ENCODE measurements at regions of chr1 and their contacts with region 1.

Region 1: DNA sequence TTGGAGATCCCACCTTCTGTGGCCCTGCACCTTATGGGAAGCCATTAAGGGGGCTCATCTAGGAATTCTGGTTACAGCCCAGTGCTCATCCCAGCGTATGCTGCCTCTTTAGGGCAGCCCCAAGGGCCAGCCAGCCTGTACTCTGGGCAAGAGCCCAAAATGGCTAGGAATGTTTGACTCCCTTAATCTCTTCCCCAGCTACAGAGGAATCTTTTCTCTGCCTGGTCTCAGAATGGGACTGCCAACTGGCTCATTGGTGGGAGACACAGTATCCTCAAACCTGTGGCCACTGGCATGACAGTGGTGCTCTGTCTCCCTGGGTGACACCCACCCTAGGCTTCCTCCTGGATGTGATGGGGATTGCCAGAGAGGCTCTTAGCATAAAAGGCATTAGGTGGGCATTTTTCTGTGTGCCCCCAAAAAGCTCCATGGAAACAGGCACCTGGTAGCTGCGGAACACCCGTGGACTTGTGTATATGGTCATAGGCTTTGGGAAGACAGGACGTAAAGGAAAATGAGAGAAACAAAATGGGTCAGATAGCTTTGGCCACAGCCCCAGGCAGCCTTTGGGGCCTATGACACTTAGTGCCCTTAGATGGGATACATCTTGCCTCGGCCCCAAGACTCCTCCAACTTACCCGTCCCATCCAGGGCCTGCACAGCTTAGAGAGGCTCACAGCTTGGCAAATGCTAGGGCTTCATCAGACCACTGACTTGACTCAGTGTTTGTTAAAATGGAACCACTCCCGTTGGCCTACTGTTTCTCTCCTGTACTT is 6.9 kb downstream of the TMEM81 start:
- DNase-seq: no peak
- H3K4me3 ChIP-seq: no peak overlapping the region
- H3K27ac ChIP-seq: no peak overlapping the region
- H3K4me1 ChIP-seq: no peaks in the 10 kb centered on the region
- H3K27me3 ChIP-seq: no peaks in the 10 kb centered on the region

Region 2: DNA sequence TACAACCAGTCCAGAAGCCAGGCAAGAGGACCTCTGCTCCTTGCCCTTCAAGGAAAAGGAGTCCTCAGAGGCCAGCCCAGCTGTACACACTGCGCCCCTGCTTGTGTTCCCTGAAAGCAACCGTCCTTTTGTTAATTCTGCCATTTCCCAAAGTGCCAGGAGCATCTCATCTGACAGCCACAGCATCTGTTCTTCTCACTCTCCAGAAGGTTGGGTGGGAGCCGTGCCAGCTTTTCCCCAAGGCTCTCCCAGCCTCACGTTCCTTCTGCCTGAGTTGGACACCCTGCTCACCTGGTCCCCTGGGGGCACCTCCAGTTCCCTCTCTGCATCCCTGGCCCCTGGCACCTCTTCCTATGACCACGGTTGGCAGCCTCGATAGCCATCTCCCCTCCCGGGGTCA is 44.8 kb before region 1 on chr1:
- CTCF ChIA-PET with region 1: no interaction called
- POLR2A ChIA-PET with region 1: no interaction called
- DNase-seq: no peak
- H3K4me3 ChIP-seq: no peak overlapping the region
- H3K27ac ChIP-seq: no peak overlapping the region
- H3K4me1 ChIP-seq: no peaks in the 10 kb centered on the region
- H3K27me3 ChIP-seq: peaks cover 0 to 11% (median 0%) of the 10 kb centered on the region in 5 experiments

Region 3: DNA sequence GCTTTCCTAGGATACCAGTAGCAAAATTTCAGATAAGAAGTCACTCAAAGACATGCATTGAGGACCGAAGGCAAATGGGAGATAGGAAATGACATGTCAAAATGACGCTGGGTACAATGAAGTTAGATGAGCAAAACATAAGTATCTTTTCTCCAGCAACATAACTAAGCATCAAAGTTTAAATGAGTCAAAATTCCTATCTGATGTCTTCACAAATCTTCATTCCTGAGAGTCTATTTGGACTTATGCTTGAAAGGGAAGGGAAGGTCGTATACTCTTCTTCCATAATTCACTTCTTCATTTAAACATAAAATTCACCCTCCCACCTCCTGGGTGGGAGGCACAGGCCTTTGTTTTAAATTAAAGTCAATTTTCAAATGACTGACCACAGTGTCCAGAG is 11.0 kb after region 1 on chr1:
- CTCF ChIA-PET with region 1: interaction called, 12 read pairs
- POLR2A ChIA-PET with region 1: no interaction called
- DNase-seq: no peak
- H3K4me3 ChIP-seq: no peak overlapping the region
- H3K27ac ChIP-seq: no peak overlapping the region
- H3K4me1 ChIP-seq: no peaks in the 10 kb centered on the region
- H3K27me3 ChIP-seq: no peaks in the 10 kb centered on the region

Measured in common myeloid progenitor, CD34-positive (primary cell).